ENCODE measurements at regions of chr2 and their contacts with region 1.

Region 1: GRCh38 chr2:59974051-59974766 is 579.2 kb downstream of the BCL11A start:
- DNase-seq: no peak
- ATAC-seq: no peak
- H3K4me3 ChIP-seq: no peak overlapping the region
- H3K27ac ChIP-seq: no peak overlapping the region
- H3K4me1 ChIP-seq: no peaks in the 10 kb centered on the region
- H3K27me3 ChIP-seq: no peaks in the 10 kb centered on the region
- CTCF ChIP-seq: no peak
- EP300 ChIP-seq: no peak
- POLR2A ChIP-seq: no peak
- RAD21 ChIP-seq: no peak

Region 2: GRCh38 chr2:59947917-59948541 is 26.2 kb before region 1 on chr2:
- CTCF ChIA-PET with region 1: no interaction called
- POLR2A ChIA-PET with region 1: no interaction called
- RAD21 ChIA-PET with region 1: no interaction called
- SMC1A ChIA-PET with region 1: no interaction called
- in situ Hi-C with region 1: no loop called
- intact Hi-C with region 1: loop called (anchors 2 kb)
- DNase-seq: no peak
- ATAC-seq: no peak
- H3K4me3 ChIP-seq: no peak overlapping the region
- H3K27ac ChIP-seq: no peak overlapping the region
- H3K4me1 ChIP-seq: no peaks in the 10 kb centered on the region
- H3K27me3 ChIP-seq: no peaks in the 10 kb centered on the region; a peak in 1 of 4 replicates
- CTCF ChIP-seq: no peak
- EP300 ChIP-seq: no peak
- POLR2A ChIP-seq: no peak
- RAD21 ChIP-seq: no peak